Activated B cell treated with CpG ODN at 0.5 μM for 24 hours (primary cell): ENCODE measurements at regions of chrX and their contacts with region 1.

Region 1: DNA sequence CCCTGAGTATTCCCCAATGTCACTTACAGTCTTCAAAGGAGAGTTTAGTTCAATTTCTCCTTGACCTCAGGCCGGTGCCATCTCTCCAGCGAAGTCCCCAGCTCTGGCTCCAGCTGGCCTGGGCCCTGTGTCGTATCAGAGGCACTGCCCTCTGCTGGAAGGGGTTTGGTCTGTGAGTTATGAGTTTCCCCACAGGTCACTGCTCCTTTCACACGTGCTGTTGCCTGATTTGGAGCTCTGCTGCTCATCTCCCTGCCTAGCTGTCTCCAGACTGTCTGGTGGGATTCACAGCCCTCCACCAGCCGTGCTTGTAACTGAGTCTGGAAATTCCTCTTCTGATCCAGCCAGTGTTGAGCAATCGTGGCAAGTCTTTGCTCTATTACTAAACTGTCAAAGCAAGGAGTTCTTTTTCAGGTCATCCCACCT is at the start of gene RAP2C:
- DNase-seq: peak; percentile 38
- ATAC-seq: peak; percentile 31
- H3K4me3 Mint-ChIP-seq: peak within 1 kb of the TSS; percentile 87
- H3K27ac Mint-ChIP-seq: peak within 1 kb of the TSS; percentile 91
- H3K4me1 Mint-ChIP-seq: peaks cover 28% of the 10 kb centered on the region
- H3K27me3 Mint-ChIP-seq: no peaks in the 10 kb centered on the region
- CTCF ChIP-seq: no peak
- total RNA-seq, gene RAP2C: 43.8 and 49.8 TPM in 2 replicates

Region 2: DNA sequence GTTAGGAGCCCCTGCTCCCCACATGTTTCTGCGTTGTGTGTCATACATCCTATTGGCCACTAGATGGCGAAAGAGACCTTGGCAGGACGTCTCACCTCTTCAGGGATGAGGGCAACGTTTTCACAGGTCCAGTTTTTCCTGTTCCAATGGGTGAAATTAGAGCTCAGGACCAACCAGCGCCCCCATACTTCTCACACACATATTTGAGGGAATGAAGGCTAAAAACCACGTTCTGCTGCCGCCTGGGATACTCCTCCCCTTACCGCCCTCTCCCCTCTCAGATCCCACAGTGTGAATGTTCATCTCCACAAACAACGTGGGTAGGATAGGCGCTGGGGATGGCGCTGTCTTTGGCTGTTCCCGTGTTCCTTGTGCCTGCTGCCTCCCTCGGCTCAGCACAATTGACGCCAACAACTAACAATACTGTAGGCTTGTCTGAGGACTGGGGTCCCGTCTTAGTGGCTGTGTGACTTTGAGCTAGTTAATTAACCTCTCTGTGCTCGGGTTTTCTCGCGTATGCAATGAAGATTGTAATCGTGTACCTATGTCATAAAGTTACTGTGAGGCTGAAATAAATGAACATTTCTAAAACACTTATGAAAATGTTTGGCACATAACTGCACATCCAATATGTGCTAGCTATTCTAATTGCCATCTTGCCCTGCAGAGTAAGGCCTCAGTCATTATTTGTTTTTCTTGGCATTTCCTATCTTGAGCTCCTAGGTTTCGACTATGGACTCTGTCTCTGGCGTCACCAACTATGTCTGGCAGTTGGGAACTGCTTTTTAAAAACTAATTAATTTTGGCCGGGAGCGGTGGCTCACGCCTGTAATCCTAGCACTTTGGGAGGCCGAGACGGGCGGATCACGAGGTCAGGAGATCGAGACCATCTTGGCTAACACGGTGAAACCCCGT is 377.6 kb before region 1 on chrX:
- CTCF ChIA-PET with region 1: interaction called, 23 read pairs
- POLR2A ChIA-PET with region 1: interaction called, 5 read pairs
- intact Hi-C with region 1: loop called (anchors 1 kb)
- DNase-seq: no peak
- ATAC-seq: peak; percentile 70
- H3K4me3 Mint-ChIP-seq: no peak overlapping the region
- H3K27ac Mint-ChIP-seq: no peak overlapping the region
- H3K4me1 Mint-ChIP-seq: peaks cover 3% of the 10 kb centered on the region
- H3K27me3 Mint-ChIP-seq: no peaks in the 10 kb centered on the region
- CTCF ChIP-seq: no peak

Region 3: DNA sequence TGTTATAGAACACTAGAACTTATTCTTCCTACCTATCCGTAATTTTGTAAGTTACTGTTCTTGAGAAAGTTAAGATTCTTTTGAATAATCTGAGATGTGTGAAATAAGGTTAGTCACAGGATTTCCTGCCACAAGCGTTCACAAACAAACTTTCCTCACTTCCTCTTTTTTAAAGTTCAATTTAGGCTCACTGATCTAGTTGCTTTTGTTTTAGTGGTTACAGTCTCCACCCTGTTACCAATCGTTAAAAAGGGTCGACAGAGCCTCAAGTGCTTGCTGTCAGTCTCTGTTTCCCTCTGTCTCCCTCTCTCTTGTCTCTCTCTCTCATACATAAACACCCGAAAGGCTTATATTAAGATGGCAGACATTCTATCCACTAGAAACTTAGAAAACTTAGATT is 232.1 kb before region 1 on chrX:
- CTCF ChIA-PET with region 1: interaction called, 3 read pairs
- POLR2A ChIA-PET with region 1: no interaction called
- intact Hi-C with region 1: loop called (anchors 1 kb)
- DNase-seq: no peak
- ATAC-seq: peak; percentile 92
- H3K4me3 Mint-ChIP-seq: peak overlapping the region; percentile 64
- H3K27ac Mint-ChIP-seq: peak overlapping the region; percentile 97
- H3K4me1 Mint-ChIP-seq: peaks cover 43% of the 10 kb centered on the region
- H3K27me3 Mint-ChIP-seq: no peaks in the 10 kb centered on the region
- CTCF ChIP-seq: no peak

Region 4: GRCh38 chrX:132092439-132093065 is 126.8 kb before region 1 on chrX:
- CTCF ChIA-PET with region 1: interaction called, 39 read pairs
- POLR2A ChIA-PET with region 1: interaction called, 5 read pairs
- intact Hi-C with region 1: loop called (anchors 1 kb)
- DNase-seq: no peak
- ATAC-seq: peak; percentile 58
- H3K4me3 Mint-ChIP-seq: no peak overlapping the region
- H3K27ac Mint-ChIP-seq: no peak overlapping the region
- H3K4me1 Mint-ChIP-seq: peaks cover 3% of the 10 kb centered on the region
- H3K27me3 Mint-ChIP-seq: peaks cover 2% of the 10 kb centered on the region
- CTCF ChIP-seq: no peak

Region 5: DNA sequence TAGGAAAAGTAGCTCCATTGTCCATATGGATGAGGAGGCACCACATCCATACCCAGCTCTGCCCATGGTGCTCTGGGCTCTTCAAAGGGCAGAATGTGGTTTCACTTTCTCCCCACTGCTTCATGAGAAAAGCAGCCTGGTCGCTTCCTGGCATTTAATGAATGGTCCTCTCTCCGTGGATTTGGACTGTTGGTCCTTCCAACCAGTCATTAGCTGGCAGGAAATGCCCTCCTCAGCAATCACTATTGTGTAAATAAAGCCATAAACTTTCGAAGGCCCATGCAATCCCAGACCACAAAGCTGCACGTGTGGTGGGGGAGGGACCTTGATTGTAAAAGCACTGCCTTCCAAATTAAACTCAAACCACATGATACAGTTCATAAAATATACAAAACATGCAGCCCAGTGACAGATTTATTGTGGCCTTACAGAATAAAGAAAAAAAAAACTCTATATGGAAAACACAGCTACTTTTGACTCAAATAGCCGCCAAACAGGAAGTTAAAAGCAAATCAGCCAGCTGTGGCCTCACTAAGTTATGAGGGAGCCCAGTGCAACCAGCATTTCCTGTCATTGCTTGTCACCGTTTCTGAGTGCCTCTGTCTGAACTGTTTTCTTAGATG is 261.3 kb after region 1 on chrX:
- CTCF ChIA-PET with region 1: no interaction called
- POLR2A ChIA-PET with region 1: interaction called, 12 read pairs
- intact Hi-C with region 1: loop called (anchors 2 kb)
- DNase-seq: peak; percentile 15
- ATAC-seq: peak; percentile 86
- H3K4me3 Mint-ChIP-seq: peak overlapping the region; percentile 87
- H3K27ac Mint-ChIP-seq: peak overlapping the region; percentile 98
- H3K4me1 Mint-ChIP-seq: peaks cover 82% of the 10 kb centered on the region
- H3K27me3 Mint-ChIP-seq: no peaks in the 10 kb centered on the region
- CTCF ChIP-seq: no peak